Endothelial cell of umbilical vein (primary cell): ENCODE measurements at regions of chr6 and their contacts with region 1.

Region 1: DNA sequence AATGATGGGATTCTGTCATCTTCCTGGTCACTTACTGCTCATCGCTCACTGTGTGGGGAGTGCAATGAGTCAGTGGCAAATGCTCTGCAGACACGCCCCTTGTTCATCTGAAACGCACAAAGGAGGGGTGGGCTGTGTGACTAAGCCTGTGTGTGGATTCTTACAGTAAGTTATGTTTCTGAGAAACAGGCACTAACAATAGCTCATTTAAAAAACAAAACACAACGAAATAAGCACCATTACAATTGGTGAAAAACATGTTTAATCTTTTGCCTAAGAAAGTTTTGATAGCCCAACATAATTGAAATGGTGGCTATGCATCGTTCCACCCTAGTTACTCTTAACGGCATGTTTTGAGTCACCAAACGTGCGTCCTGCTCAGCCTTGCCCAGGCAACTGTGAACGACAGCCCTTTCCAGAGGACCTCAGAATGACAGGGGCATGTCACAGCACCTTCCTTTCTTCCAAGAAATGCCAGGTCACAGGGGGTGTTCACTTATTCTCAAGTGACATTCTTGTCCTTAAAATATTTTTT is 118.4 kb upstream of the SGK1 start:
- DNase-seq: peak; percentile 94
- H3K4me3 ChIP-seq: peak overlapping the region in 1 of 3 experiments; percentile 3
- H3K27ac ChIP-seq: peak overlapping the region; percentile 88
- H3K4me1 ChIP-seq: peaks cover 20% of the 10 kb centered on the region
- H3K27me3 ChIP-seq: no peaks in the 10 kb centered on the region
- CTCF ChIP-seq: no peak
- POLR2A ChIP-seq: no peak

Region 2: GRCh38 chr6:134288538-134289203 is 147.7 kb before region 1 on chr6:
- CTCF ChIA-PET with region 1: no interaction called
- POLR2A ChIA-PET with region 1: no interaction called
- dilution Hi-C with region 1: no loop called
- intact Hi-C with region 1: loop called (anchors 1 kb)
- DNase-seq: peak; percentile 74
- H3K4me3 ChIP-seq: no peak overlapping the region
- H3K27ac ChIP-seq: peak overlapping the region; percentile 100
- H3K4me1 ChIP-seq: peaks cover 25% of the 10 kb centered on the region
- H3K27me3 ChIP-seq: no peaks in the 10 kb centered on the region
- CTCF ChIP-seq: no peak
- POLR2A ChIP-seq: peak; percentile 30

Region 3: GRCh38 chr6:134537146-134537555 is 100.8 kb after region 1 on chr6:
- CTCF ChIA-PET with region 1: no interaction called
- POLR2A ChIA-PET with region 1: no interaction called
- dilution Hi-C with region 1: loop called (anchors 25 kb)
- intact Hi-C with region 1: no loop called
- DNase-seq: no peak
- H3K4me3 ChIP-seq: no peak overlapping the region
- H3K27ac ChIP-seq: no peak overlapping the region
- H3K4me1 ChIP-seq: peaks cover 6% of the 10 kb centered on the region
- H3K27me3 ChIP-seq: no peaks in the 10 kb centered on the region
- CTCF ChIP-seq: no peak
- POLR2A ChIP-seq: no peak

Region 4: GRCh38 chr6:134954272-134955000 is 518.1 kb after region 1 on chr6:
- CTCF ChIA-PET with region 1: no interaction called
- POLR2A ChIA-PET with region 1: no interaction called
- dilution Hi-C with region 1: no loop called
- intact Hi-C with region 1: no loop called
- DNase-seq: no peak
- H3K4me3 ChIP-seq: no peak overlapping the region
- H3K27ac ChIP-seq: no peak overlapping the region
- H3K4me1 ChIP-seq: no peaks in the 10 kb centered on the region
- H3K27me3 ChIP-seq: no peaks in the 10 kb centered on the region
- CTCF ChIP-seq: no peak
- POLR2A ChIP-seq: no peak